Heart left ventricle (tissue), 16 donors: ENCODE measurements at regions of chr6 and their contacts with region 1.

Region 1: GRCh38 chr6:41846666-41847237 is 48.4 kb downstream of the USP49 start:
- DNase-seq: peak in 4 of 5 donors; percentile 43 to 70 (median 56)
- ATAC-seq: peak; percentile 87 to 98 (median 96)
- H3K4me3 ChIP-seq: no peak overlapping the region
- H3K27ac ChIP-seq: peak overlapping the region; percentile 2 to 68 (median 42)
- H3K4me1 ChIP-seq: peaks cover 0 to 15% (median 4%) of the 10 kb centered on the region in 12 donors
- H3K27me3 ChIP-seq: no peaks in the 10 kb centered on the region
- CTCF ChIP-seq: peak; percentile 67 to 88 (median 78)
- POLR2A ChIP-seq: no peak

Region 2: GRCh38 chr6:41936073-41936837 is 89.5 kb after region 1 on chr6:
- intact Hi-C with region 1: loop called in 3 of 10 experiments (anchors 5 to 10 kb)
- DNase-seq: peak; percentile 71 to 87 (median 76)
- ATAC-seq: peak; percentile 62 to 82 (median 72)
- H3K4me3 ChIP-seq: peak overlapping the region in 2 of 12 donors; percentile 9 to 93
- H3K27ac ChIP-seq: peak overlapping the region in 9 of 12 donors; percentile 46 to 95 (median 87)
- H3K4me1 ChIP-seq: peaks cover 7 to 65% (median 48%) of the 10 kb centered on the region in 12 donors
- H3K27me3 ChIP-seq: no peaks in the 10 kb centered on the region
- CTCF ChIP-seq: peak; percentile 67 to 86 (median 76)
- POLR2A ChIP-seq: no peak

Region 3: GRCh38 chr6:42166444-42167141 is 319.8 kb after region 1 on chr6:
- intact Hi-C with region 1: loop called in 1 of 10 experiments (anchors 2 kb)
- DNase-seq: peak in 4 of 5 donors; percentile 41 to 60 (median 57)
- ATAC-seq: peak in 3 of 4 donors; percentile 73 to 82 (median 74)
- H3K4me3 ChIP-seq: no peak overlapping the region
- H3K27ac ChIP-seq: no peak overlapping the region
- H3K4me1 ChIP-seq: peaks cover 0 to 4% (median 0%) of the 10 kb centered on the region in 12 donors
- H3K27me3 ChIP-seq: no peaks in the 10 kb centered on the region
- CTCF ChIP-seq: peak; percentile 88 to 95 (median 92)
- POLR2A ChIP-seq: no peak